Activated CD4-positive, alpha-beta T cell treated with anti-CD3 and anti-CD28 coated beads for 36 hours (primary cell): ENCODE measurements at regions of chr5 and their contacts with region 1.

Region 1: DNA sequence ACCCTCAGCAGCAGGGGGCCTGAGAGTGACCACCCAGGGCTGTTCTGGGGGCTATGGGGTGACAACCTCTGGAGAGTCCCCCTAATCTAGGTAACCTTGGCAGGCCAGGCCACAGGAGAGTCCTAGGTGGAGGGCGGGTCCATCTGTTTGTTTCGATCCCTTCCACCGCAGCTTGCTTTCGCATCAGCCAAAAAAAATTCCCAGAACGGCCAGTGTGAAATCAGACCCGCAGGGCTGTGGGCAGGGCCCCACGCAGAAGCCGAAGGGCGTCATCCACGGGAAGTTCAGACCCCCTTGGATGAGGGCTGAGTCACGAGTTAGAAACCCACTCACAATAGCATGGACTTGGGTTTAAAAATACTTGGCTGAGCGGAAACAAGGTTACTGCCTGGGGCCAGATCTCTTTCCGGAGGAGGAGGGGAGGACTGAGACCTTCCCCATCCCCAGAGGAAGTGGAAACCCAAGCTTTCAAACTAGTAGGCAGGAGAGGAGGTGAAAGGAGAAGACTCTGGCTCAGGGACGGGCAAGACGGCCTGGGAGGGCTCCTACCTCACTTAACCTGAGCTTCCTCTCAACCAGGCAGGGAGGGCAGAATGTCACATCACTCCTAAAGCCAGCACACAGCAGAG is 8.5 kb downstream of the STK10 start:
- DNase-seq: peak; percentile 60
- ATAC-seq: peak; percentile 8
- H3K4me3 Mint-ChIP-seq: peak overlapping the region; percentile 75
- H3K27ac Mint-ChIP-seq: peak overlapping the region; percentile 99
- H3K4me1 Mint-ChIP-seq: peaks cover 98% of the 10 kb centered on the region
- H3K27me3 Mint-ChIP-seq: no peaks in the 10 kb centered on the region

Region 2: DNA sequence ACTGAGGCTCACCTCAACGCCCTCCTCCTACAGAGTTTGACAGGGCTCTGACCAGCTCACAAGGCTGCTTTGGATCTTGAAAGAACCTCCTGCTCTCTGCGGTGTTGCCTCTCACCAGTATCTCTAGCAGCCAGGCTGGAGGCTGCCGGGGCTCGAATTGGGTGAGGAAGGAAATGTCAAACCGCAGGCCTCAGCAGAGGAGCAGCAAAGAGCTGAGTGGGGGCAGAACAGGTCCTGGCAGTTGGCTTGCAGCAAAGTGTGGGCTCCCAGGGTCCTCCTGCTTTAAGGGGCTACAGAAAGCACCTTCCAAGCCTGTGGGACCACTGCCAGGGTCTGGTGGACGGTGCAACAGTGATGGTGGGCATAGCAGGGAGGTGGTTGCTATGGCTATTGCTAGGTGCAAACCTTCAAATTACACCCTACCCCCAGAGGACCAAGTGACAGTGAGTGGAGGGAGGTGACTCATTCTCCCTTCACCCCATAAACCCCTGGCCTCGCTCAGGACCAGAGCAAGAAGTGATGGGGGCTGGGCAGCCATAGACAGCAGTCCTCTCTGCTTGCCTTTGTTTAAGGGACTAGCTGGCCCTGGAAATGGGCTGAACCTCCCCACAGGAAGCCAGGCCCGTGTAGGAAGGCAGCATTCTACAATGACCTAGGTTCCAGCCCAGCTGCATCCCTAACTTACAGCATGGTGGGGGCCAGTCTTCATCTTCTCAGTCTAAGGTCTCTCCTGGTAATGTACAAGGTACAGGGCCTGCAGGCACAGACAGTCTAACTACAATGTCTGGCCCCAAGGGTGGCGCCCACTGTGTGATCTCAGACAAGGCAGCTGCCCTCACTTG is 1900.6 kb before region 1 on chr5:
- CTCF ChIA-PET with region 1: no interaction called
- POLR2A ChIA-PET with region 1: interaction called, 6 read pairs
- intact Hi-C with region 1: loop called in 1 of 2 experiments (anchors 10 kb)
- DNase-seq: peak; percentile 93
- ATAC-seq: peak; percentile 73
- H3K4me3 Mint-ChIP-seq: peak overlapping the region; percentile 48
- H3K27ac Mint-ChIP-seq: peak overlapping the region; percentile 90
- H3K4me1 Mint-ChIP-seq: peaks cover 97% of the 10 kb centered on the region
- H3K27me3 Mint-ChIP-seq: no peaks in the 10 kb centered on the region

Region 3: GRCh38 chr5:171387345-171387969 is 792.0 kb before region 1 on chr5 and contains the start of gene NPM1:
- CTCF ChIA-PET with region 1: no interaction called
- POLR2A ChIA-PET with region 1: no interaction called
- intact Hi-C with region 1: loop called in 1 of 2 experiments (anchors 10 kb)
- DNase-seq: peak; percentile 99
- ATAC-seq: peak; percentile 83
- H3K4me3 Mint-ChIP-seq: peak within 1 kb of the TSS; percentile 88
- H3K27ac Mint-ChIP-seq: peak within 1 kb of the TSS; percentile 99
- H3K4me1 Mint-ChIP-seq: peaks cover 37% of the 10 kb centered on the region
- H3K27me3 Mint-ChIP-seq: no peaks in the 10 kb centered on the region
- total RNA-seq, gene NPM1: 3,156 to 3,905 TPM

Region 4: DNA sequence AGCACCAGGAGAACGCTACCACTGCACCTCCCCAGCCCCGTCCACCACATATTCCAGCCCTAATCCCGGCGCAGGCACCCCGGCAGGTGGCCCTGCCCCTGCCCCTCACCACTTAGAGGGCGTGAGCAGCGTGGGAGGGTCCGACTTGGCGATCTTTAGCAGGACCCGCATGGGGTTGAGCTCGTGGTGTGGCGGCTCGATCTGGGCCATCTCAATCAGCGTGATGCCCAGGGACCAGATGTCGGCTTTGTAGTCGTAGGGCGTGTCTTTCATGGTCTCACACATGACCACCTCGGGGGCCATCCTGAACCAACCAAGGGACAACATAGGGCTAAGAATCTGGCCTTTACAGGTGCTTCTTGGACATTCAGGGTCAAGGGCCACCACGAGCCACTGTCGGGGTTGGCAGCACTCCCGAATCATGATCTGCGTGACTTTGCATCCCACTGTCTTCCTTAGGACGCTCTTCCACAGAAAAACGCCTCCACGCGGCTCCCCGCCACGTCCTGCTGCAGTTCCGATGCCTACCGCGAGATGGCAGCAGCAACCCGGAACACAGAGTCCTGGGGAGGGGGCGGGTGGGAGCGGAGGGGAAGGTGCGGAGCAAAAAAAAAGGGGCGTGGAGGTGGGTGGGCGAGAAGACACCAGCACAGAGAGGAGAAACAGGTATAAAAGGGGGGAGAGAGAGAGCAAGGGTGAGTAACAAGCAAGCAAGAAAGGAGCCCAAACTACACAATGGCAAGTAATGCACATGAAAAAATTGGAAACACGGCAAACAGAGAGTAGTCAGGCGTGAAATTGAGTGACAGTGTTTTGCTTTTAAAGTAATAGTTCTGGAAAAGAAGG is 72.7 kb before region 1 on chr5:
- CTCF ChIA-PET with region 1: interaction called, 9 read pairs
- POLR2A ChIA-PET with region 1: interaction called, 21 read pairs
- intact Hi-C with region 1: loop called (anchors 1 kb)
- DNase-seq: peak; percentile 79
- ATAC-seq: no peak
- H3K4me3 Mint-ChIP-seq: no peak overlapping the region
- H3K27ac Mint-ChIP-seq: peak overlapping the region; percentile 73
- H3K4me1 Mint-ChIP-seq: peaks cover 61% of the 10 kb centered on the region
- H3K27me3 Mint-ChIP-seq: no peaks in the 10 kb centered on the region

Region 5: DNA sequence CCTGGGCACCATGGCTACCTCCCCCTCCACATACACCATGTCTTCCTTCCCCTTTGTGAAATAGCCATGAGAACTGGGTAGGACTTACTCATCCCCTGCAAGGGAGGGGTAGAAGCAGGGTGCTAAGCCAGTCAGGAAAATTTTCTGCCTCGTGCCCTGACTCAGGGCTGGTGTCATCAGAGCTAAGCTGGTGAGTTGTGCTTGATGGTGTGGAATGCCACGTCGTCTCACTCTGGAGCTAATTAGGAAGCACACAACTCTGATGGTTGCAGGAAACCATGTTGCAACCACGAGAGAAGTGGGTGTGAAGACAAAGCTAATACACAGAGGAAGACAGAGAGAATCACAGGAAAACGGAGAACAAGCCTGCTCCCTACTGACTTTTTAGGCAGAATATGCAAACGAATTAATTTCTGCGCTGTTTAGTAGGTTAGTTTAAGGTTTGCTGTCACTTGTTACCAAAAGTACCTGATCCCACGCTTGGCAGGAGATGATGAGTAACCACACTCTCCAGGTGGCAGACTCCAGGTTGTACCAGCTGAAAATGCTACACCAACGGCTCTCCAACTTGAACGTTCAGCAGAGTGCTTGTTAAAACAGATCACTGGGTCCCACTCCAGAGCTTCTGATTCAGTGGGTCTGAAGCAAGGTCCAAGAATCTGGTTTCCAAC is 46.0 kb before region 1 on chr5:
- CTCF ChIA-PET with region 1: interaction called, 4 read pairs
- POLR2A ChIA-PET with region 1: interaction called, 5 read pairs
- intact Hi-C with region 1: loop called (anchors 1 to 5 kb)
- DNase-seq: peak; percentile 83
- ATAC-seq: peak; percentile 99
- H3K4me3 Mint-ChIP-seq: peak overlapping the region; percentile 11
- H3K27ac Mint-ChIP-seq: peak overlapping the region; percentile 99
- H3K4me1 Mint-ChIP-seq: peaks cover 59% of the 10 kb centered on the region
- H3K27me3 Mint-ChIP-seq: no peaks in the 10 kb centered on the region

Region 6: DNA sequence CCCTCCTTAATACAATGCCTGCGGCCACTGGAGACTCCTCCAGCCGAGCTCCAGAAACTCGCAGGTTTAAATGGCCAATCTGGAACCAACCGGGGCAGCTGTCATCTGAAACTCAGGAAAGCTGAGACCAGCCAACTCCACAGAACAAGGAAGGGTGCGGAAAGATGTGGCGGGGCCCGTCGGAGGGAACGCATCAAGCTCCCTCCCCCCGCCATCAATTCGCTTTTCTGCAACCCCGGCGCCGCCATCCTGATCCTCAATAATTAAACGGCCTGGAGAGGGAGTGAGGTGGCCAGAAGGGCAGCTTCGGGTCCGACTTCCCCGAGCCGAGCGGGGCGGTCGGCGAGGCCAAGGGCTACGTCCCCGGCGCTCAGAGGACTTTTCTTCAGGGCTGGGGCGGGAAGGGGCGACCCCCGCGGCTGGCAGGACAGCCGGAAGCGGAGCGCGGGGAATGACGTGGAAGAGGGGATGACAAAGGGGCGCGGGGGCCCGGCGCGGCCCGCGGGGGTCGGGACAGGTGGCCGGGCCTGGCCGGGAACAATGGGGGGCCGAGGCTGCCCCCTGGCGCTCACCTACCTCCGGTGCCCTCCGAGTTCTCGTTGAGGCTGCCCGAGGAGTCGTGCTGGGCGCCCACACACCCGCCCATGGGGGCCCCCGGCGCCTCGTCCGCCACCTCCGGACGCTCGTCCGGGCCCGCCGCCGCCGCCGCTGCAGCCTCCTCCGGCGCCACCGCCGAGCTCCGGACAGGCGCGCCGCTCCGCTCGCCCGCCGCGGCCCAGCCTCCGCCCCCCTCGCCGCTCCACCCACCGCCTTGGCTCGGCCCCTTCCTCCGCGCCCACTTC is 103.8 kb after region 1 on chr5 and contains the start of gene UBTD2:
- CTCF ChIA-PET with region 1: interaction called, 4 read pairs
- POLR2A ChIA-PET with region 1: interaction called, 5 read pairs
- intact Hi-C with region 1: loop called in 1 of 2 experiments (anchors 1 kb)
- DNase-seq: peak; percentile 84
- ATAC-seq: peak; percentile 85
- H3K4me3 Mint-ChIP-seq: peak within 1 kb of the TSS; percentile 85
- H3K27ac Mint-ChIP-seq: peak within 1 kb of the TSS; percentile 87
- H3K4me1 Mint-ChIP-seq: peaks cover 16% of the 10 kb centered on the region
- H3K27me3 Mint-ChIP-seq: no peaks in the 10 kb centered on the region
- total RNA-seq, gene UBTD2: 6.0 to 6.1 TPM